H1 (cell line): ENCODE measurements at regions of chr17 and their contacts with region 1.

Region 1: GRCh38 chr17:45247429-45248131 is 14.3 kb downstream of the SPATA32 start:
- DNase-seq: peak; percentile 94 to 97
- H3K4me3 ChIP-seq: peak overlapping the region; percentile 70 to 82 (median 74)
- H3K27ac ChIP-seq: peak overlapping the region; percentile 71
- H3K4me1 ChIP-seq: peaks cover 3 to 15% (median 12%) of the 10 kb centered on the region in 4 experiments
- H3K27me3 ChIP-seq: no peaks in the 10 kb centered on the region; a peak in 2 of 7 replicates
- CTCF ChIP-seq: no peak
- EP300 ChIP-seq: peak in 1 of 2 experiments; percentile 53; a peak in 1 of 3 replicates
- POLR2A ChIP-seq: peak in 1 of 2 experiments; percentile 81; a peak in 2 of 3 replicates
- RAD21 ChIP-seq: no peak

Region 2: DNA sequence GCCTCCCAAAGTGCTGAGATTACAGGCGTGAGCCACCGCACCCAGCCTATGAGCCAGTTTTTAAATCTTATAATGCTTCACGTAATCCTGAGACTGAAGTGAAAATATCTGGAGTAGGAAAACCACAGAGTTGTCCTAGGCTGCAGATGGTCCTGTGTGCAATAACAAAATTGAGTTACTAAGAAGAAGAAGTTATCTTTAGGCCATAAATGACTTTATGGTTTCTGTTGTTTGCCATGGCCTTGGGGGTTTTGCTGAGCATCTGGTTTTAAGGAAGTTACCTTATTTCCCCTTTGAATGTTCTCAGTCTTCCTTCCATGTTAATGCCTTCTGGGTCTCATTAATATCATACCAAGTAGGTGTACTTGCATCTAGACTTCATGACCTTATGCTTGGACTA is 169.9 kb before region 1 on chr17:
- CTCF ChIA-PET with region 1: no interaction called
- POLR2A ChIA-PET with region 1: no interaction called
- DNase-seq: no peak
- H3K4me3 ChIP-seq: no peak overlapping the region
- H3K27ac ChIP-seq: no peak overlapping the region
- H3K4me1 ChIP-seq: no peaks in the 10 kb centered on the region
- H3K27me3 ChIP-seq: no peaks in the 10 kb centered on the region
- CTCF ChIP-seq: no peak
- EP300 ChIP-seq: no peak
- POLR2A ChIP-seq: no peak
- RAD21 ChIP-seq: no peak

Region 3: DNA sequence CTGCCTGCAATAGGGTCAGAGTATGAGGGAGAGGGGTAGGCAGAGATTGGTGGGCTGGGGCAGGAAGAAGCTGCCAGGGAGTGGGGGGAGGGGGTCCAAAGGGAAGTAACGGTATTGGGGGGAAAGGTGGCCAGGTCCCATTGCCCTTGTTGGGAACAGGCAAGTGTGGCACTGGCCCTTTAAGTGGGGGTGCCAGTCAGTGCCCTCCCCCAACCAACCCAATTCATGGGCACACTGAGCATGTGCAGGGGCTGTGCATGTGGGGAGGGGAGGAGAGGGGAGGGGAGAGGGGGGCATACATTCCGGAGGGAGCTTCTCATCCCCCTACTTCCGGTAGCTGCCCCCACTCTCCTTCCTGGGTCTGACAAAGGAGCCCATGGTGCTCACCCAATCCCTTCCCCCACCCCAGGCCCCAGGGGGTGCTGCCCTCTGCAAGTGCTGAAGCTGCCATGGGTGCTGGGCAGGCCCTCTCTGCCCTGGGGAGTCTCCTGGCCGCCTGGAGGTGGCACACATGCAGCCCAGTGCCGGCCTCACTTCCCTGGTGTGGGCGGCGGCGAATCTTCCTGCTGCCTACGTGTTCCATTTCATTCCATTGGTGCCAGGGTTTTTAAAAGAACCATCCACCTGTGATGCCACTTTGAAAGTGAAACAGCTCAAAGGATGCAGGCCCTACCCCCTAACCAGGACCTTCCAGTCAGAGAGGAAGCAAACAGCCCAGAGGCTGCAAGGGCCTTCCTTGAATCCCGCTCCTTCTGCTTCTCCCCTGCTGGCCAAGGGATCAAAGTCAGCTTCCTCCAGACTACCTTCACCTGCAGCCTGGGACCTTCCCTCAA is 74.9 kb before region 1 on chr17:
- CTCF ChIA-PET with region 1: no interaction called
- POLR2A ChIA-PET with region 1: interaction called, 19 read pairs
- DNase-seq: peak in 1 of 2 experiments; percentile 70
- H3K4me3 ChIP-seq: peak overlapping the region in 3 of 4 experiments; percentile 4 to 28 (median 10); a peak in 3 of 8 replicates
- H3K27ac ChIP-seq: peak overlapping the region; percentile 64
- H3K4me1 ChIP-seq: peaks cover 5 to 29% (median 26%) of the 10 kb centered on the region in 4 experiments
- H3K27me3 ChIP-seq: no peaks in the 10 kb centered on the region
- CTCF ChIP-seq: peak in 1 of 3 experiments; percentile 20; a peak in 1 of 4 replicates
- EP300 ChIP-seq: no peak
- POLR2A ChIP-seq: no peak
- RAD21 ChIP-seq: no peak

Region 4: DNA sequence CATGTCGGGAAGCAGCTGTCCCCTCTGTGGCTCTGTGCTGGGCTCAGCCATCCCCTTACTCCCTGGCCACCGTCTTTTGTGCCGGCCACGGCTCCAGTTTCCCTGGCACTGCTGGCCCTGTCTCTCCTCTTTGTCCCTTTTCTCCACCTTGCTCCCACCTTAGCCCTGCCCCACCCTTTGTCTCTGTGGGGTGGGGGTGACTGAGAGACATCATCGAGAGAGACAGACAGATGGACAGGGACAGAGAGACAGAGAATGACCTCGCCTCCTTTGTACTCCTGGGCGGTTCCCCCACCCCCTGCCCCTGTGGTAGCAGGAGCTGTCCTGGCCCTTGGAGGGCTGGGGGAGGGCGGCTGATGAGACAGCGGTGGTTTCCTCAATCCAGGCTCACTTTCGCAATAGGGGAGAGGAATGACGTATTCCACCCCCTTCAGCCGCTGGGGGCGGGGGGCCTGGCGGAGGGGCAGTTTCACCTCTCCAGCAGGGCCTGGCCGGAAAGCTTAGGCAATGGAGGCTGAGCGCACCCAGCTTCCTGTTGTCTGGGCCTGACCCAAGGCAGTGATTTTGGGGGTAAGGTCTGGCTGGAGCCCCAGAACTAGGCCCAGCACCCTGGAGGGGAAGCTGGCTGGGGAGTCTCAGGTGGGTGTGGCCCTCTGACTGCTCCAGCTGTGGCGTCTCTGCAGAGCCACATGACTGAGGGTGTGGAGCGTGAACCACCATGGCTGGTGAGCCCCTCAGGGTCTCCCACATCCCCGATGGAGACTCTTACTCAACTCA is 18.6 kb before region 1 on chr17:
- CTCF ChIA-PET with region 1: interaction called, 362 read pairs
- POLR2A ChIA-PET with region 1: interaction called, 17 read pairs
- DNase-seq: no peak
- H3K4me3 ChIP-seq: no peak overlapping the region
- H3K27ac ChIP-seq: no peak overlapping the region
- H3K4me1 ChIP-seq: peaks cover 5 to 29% (median 20%) of the 10 kb centered on the region in 4 experiments
- H3K27me3 ChIP-seq: peaks cover 0 to 5% (median under 1%) of the 10 kb centered on the region in 4 experiments; a peak in 3 of 7 replicates
- CTCF ChIP-seq: no peak
- EP300 ChIP-seq: no peak
- POLR2A ChIP-seq: no peak
- RAD21 ChIP-seq: no peak

Region 5: GRCh38 chr17:45261577-45262515 is 14.3 kb after region 1 on chr17 and contains the start of gene SPATA32:
- CTCF ChIA-PET with region 1: interaction called, 362 read pairs
- POLR2A ChIA-PET with region 1: interaction called, 43 read pairs
- DNase-seq: peak in 1 of 2 experiments; percentile 83
- H3K4me3 ChIP-seq: peak within 1 kb of the TSS; percentile 52 to 69 (median 60)
- H3K27ac ChIP-seq: 0 out of 2 replicates have a peak within 1 kb of the TSS, but pooled peaks have one; percentile 40
- H3K4me1 ChIP-seq: peaks cover 4 to 14% (median 8%) of the 10 kb centered on the region in 4 experiments
- H3K27me3 ChIP-seq: peaks cover 0 to 5% (median 2%) of the 10 kb centered on the region in 4 experiments; a peak in 3 of 7 replicates
- CTCF ChIP-seq: no peak
- EP300 ChIP-seq: 0 out of 3 replicates have a peak, but pooled peaks of 1 of the 2 experiments have one; percentile 31
- POLR2A ChIP-seq: peak in 1 of 2 experiments; percentile 15; a peak in 1 of 3 replicates
- RAD21 ChIP-seq: no peak
- total RNA-seq, gene SPATA32: not detected in 2 replicates

Region 6: GRCh38 chr17:45277216-45277849 is 29.8 kb after region 1 on chr17:
- CTCF ChIA-PET with region 1: interaction called, 85 read pairs
- POLR2A ChIA-PET with region 1: interaction called, 5 read pairs
- DNase-seq: peak; percentile 84 to 89
- H3K4me3 ChIP-seq: no peak overlapping the region
- H3K27ac ChIP-seq: no peak overlapping the region
- H3K4me1 ChIP-seq: peaks cover 0 to 4% (median under 1%) of the 10 kb centered on the region in 4 experiments; a peak in 1 of 7 replicates
- H3K27me3 ChIP-seq: no peaks in the 10 kb centered on the region
- CTCF ChIP-seq: peak; percentile 84 to 90 (median 89)
- EP300 ChIP-seq: no peak
- POLR2A ChIP-seq: no peak
- RAD21 ChIP-seq: peak; percentile 77 to 83

Region 7: DNA sequence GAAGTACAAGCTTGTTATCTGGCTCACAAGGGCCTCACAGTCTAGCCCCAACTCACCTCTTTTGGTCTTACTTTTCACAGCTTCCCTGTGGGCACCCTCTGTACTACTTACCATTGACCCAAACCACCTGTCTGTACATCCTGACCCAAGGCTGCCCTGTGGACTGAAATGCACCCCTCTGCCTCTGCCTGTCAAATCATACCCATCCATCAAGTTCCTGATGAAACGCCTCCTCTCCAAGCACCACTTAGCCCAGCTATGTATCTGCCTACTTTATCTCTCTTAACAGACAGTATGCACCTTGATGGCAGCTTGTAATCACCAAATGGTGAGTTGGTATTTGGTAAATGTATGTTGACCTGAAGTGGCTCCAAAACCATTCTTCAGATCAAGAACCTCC is 76.8 kb after region 1 on chr17:
- CTCF ChIA-PET with region 1: no interaction called
- POLR2A ChIA-PET with region 1: no interaction called
- DNase-seq: no peak
- H3K4me3 ChIP-seq: no peak overlapping the region
- H3K27ac ChIP-seq: no peak overlapping the region
- H3K4me1 ChIP-seq: no peaks in the 10 kb centered on the region
- H3K27me3 ChIP-seq: no peaks in the 10 kb centered on the region; a peak in 2 of 7 replicates
- CTCF ChIP-seq: no peak
- EP300 ChIP-seq: no peak
- POLR2A ChIP-seq: no peak
- RAD21 ChIP-seq: no peak